Naive thymus-derived CD4-positive, alpha-beta T cell (primary cell): ENCODE measurements at regions of chr17 and their contacts with region 1.

Region 1: DNA sequence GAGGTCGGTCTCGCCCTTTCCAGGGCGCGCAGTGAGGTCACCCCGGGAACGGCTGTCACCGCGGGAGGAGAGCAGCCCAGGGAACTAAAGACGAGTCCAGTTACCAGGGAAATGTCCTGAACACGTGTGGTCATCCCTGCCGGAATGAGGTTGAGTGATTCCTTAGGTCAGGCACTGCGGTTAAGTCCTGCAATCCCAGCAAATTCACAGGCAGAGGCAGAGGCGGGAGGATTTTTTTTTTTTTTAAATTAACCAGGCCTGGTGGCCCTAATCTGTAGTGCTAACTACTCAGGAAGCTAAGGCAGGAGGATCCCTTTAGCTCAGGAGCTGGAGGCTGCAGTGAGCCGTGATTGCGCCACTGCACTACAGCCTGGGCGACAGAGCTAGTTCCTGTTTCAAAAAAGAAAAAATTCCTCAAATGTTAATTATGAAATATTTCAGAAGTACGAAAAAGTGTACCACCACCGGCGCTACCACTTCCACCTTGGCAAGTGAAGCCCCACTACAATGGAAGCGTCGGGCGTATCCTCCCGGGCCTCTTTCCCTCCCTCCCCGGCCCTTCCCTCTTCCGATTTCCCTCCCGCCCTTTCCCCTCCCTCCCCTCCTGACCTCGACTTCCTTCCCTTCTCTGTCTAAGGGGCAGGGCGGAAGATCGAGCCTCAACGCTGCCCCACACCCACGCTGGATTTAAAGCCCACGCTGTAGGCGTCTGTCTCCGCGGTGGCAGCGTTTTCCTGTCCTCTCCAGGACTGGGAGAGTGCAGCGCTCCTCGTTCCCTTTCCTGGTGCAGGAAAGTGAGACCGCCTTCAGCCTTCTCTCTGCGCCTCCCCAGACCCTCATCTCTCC is 27.3 kb downstream of the SLFN11 start:
- DNase-seq: peak in 7 of 9 donors; percentile 17 to 38 (median 23)
- ATAC-seq: peak; percentile 77
- H3K4me3 ChIP-seq: peak overlapping the region; percentile 65
- H3K4me3 Mint-ChIP-seq: peak overlapping the region; percentile 91 to 98 (median 93)
- H3K27ac ChIP-seq: peak overlapping the region; percentile 34
- H3K27ac Mint-ChIP-seq: peak overlapping the region; percentile 47 to 89 (median 82)
- H3K4me1 ChIP-seq: peaks cover 13 to 29% of the 10 kb centered on the region in 2 donors
- H3K4me1 Mint-ChIP-seq: peaks cover 33 to 58% (median 40%) of the 10 kb centered on the region in 7 donors
- H3K27me3 ChIP-seq: no peaks in the 10 kb centered on the region
- H3K27me3 Mint-ChIP-seq: peaks cover 0 to 33% (median 0%) of the 10 kb centered on the region in 5 donors

Region 2: DNA sequence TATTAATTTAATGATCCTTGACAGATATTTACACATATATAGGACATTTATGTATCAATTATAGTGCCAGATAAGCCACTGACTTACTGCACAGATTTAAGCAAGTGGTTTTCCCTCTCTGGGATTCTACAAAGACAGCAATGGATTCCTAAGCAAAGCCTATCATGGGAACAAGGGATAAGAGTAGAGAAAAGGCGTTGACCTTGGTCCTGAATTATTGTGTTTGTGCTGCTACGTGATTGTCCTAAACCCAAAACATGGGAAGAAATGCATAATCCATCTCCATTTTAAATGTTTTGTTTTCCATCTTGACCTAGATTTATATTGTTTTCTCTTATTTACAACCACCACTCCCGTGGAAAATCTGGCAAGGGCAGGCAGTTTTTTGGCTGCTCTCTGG is 13.2 kb after region 1 on chr17:
- CTCF ChIA-PET with region 1: no interaction called
- POLR2A ChIA-PET with region 1: no interaction called
- intact Hi-C with region 1: loop called in 1 of 2 experiments (anchors 1 kb)
- DNase-seq: no peak
- ATAC-seq: no peak
- H3K4me3 ChIP-seq: no peak overlapping the region
- H3K4me3 Mint-ChIP-seq: no peak overlapping the region
- H3K27ac ChIP-seq: no peak overlapping the region
- H3K27ac Mint-ChIP-seq: no peak overlapping the region
- H3K4me1 ChIP-seq: no peaks in the 10 kb centered on the region
- H3K4me1 Mint-ChIP-seq: peaks cover 8 to 57% (median 18%) of the 10 kb centered on the region in 7 donors
- H3K27me3 ChIP-seq: no peaks in the 10 kb centered on the region
- H3K27me3 Mint-ChIP-seq: no peaks in the 10 kb centered on the region